Naive thymus-derived CD4-positive, alpha-beta T cell (primary cell): ENCODE measurements at regions of chr11 and their contacts with region 1.

Region 1: GRCh38 chr11:108222686-108223448 is at the start of gene ATM:
- DNase-seq: peak; percentile 94 to 99 (median 98)
- ATAC-seq: peak; percentile 91
- H3K4me3 ChIP-seq: peak within 1 kb of the TSS; percentile 93
- H3K4me3 Mint-ChIP-seq: no peak within 1 kb of the TSS
- H3K27ac ChIP-seq: peak within 1 kb of the TSS; percentile 98
- H3K27ac Mint-ChIP-seq: no peak within 1 kb of the TSS
- H3K4me1 ChIP-seq: peaks cover 26 to 31% of the 10 kb centered on the region in 2 donors
- H3K4me1 Mint-ChIP-seq: peaks cover 32 to 57% (median 37%) of the 10 kb centered on the region in 7 donors
- H3K27me3 ChIP-seq: no peaks in the 10 kb centered on the region
- H3K27me3 Mint-ChIP-seq: no peaks in the 10 kb centered on the region
- total RNA-seq, gene ATM: 183 to 879 (median 440) TPM

Region 2: GRCh38 chr11:107457558-107458271 is 765.2 kb before region 1 on chr11 and contains the start of gene CWF19L2:
- CTCF ChIA-PET with region 1: no interaction called
- POLR2A ChIA-PET with region 1: no interaction called
- intact Hi-C with region 1: loop called in 1 of 2 experiments (anchors 1 kb)
- DNase-seq: peak; percentile 62 to 94 (median 92)
- ATAC-seq: peak; percentile 99
- H3K4me3 ChIP-seq: peak within 1 kb of the TSS; percentile 91
- H3K4me3 Mint-ChIP-seq: peak within 1 kb of the TSS; percentile 84 to 100 (median 93)
- H3K27ac ChIP-seq: peak within 1 kb of the TSS; percentile 82
- H3K27ac Mint-ChIP-seq: peak within 1 kb of the TSS; percentile 87 to 98 (median 96)
- H3K4me1 ChIP-seq: peaks cover 7 to 13% of the 10 kb centered on the region in 2 donors
- H3K4me1 Mint-ChIP-seq: peaks cover 19 to 50% (median 32%) of the 10 kb centered on the region in 7 donors
- H3K27me3 ChIP-seq: no peaks in the 10 kb centered on the region
- H3K27me3 Mint-ChIP-seq: peaks cover 0 to 10% (median 0%) of the 10 kb centered on the region in 5 donors
- total RNA-seq, gene CWF19L2: 17.0 to 38.9 (median 27.2) TPM

Region 3: DNA sequence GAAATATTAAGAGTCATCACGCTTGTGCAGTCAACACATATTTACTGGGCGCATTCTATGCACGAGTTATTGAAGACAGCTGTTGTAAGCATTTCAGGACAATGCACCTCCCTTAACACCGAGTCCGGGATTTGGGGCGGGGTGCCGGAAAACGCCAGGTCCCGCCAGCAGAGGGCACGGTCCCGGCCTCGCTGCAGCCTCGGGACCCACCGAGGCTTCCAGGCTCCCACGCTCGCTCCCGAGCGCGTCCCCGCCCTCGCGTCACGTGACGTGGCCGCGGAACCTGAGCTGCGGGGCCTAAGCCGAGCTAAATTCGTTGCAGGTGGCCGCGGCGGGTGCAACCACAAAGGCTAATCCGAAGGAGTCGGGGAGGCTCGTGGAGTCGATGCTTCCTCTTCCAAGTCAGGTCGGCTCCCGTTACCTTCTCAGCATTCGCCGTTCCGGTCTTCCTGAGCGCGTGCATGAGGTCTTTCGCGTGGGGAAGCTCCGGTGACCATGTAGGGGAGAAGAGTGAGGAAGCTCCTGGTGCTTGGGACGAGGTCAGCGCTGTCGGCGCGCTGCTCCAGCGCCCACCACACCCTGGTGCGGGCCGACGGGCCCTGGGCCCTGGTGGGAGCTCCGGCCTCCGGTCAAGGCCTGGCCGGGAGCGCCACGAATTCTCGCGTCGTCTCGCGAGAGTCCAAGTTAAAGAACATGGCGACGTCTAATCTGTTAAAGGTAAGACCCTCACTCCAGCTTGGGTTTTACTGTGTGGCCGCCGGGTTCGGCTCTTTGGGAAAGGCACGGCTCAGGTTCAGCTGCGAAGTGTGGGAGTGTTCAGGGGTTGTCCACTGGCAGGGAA is 214.0 kb before region 1 on chr11 and contains the start of gene CUL5:
- CTCF ChIA-PET with region 1: no interaction called
- POLR2A ChIA-PET with region 1: no interaction called
- intact Hi-C with region 1: loop called (anchors 2 kb)
- DNase-seq: peak; percentile 84 to 94 (median 90)
- ATAC-seq: peak; percentile 94
- H3K4me3 ChIP-seq: peak within 1 kb of the TSS; percentile 94
- H3K4me3 Mint-ChIP-seq: peak within 1 kb of the TSS in 9 of 10 donors; percentile 89 to 100 (median 99)
- H3K27ac ChIP-seq: peak within 1 kb of the TSS; percentile 94
- H3K27ac Mint-ChIP-seq: peak within 1 kb of the TSS; percentile 94 to 99 (median 96)
- H3K4me1 ChIP-seq: peaks cover 15 to 25% of the 10 kb centered on the region in 2 donors
- H3K4me1 Mint-ChIP-seq: peaks cover 7 to 18% (median 12%) of the 10 kb centered on the region in 7 donors
- H3K27me3 ChIP-seq: no peaks in the 10 kb centered on the region
- H3K27me3 Mint-ChIP-seq: no peaks in the 10 kb centered on the region
- total RNA-seq, gene CUL5: 32.3 to 59.7 (median 39.2) TPM

Region 4: GRCh38 chr11:108199446-108200321 is 23.2 kb before region 1 on chr11:
- CTCF ChIA-PET with region 1: no interaction called
- POLR2A ChIA-PET with region 1: interaction called, 5 read pairs
- intact Hi-C with region 1: loop called (anchors 1 to 2 kb)
- DNase-seq: peak in 3 of 9 donors; percentile 8 to 59 (median 46)
- ATAC-seq: peak; percentile 85
- H3K4me3 ChIP-seq: no peak overlapping the region
- H3K4me3 Mint-ChIP-seq: peak overlapping the region in 6 of 10 donors; percentile 10 to 55 (median 42)
- H3K27ac ChIP-seq: peak overlapping the region; percentile 31
- H3K27ac Mint-ChIP-seq: peak overlapping the region in 8 of 9 donors; percentile 7 to 86 (median 69)
- H3K4me1 ChIP-seq: peaks cover 0 to 40% of the 10 kb centered on the region in 2 donors
- H3K4me1 Mint-ChIP-seq: peaks cover 31 to 89% (median 81%) of the 10 kb centered on the region in 7 donors
- H3K27me3 ChIP-seq: no peaks in the 10 kb centered on the region
- H3K27me3 Mint-ChIP-seq: no peaks in the 10 kb centered on the region

Region 5: GRCh38 chr11:108253176-108253575 is 30.3 kb after region 1 on chr11:
- CTCF ChIA-PET with region 1: interaction called, 5 read pairs
- POLR2A ChIA-PET with region 1: interaction called, 161 read pairs
- intact Hi-C with region 1: loop called (anchors 1 to 5 kb)
- DNase-seq: peak in 2 of 9 donors; percentile 16 to 35
- ATAC-seq: no peak
- H3K4me3 ChIP-seq: no peak overlapping the region
- H3K4me3 Mint-ChIP-seq: peak overlapping the region in 1 of 10 donors; percentile 23
- H3K27ac ChIP-seq: peak overlapping the region; percentile 28
- H3K27ac Mint-ChIP-seq: peak overlapping the region in 6 of 9 donors; percentile 48 to 83 (median 73)
- H3K4me1 ChIP-seq: peaks cover 9 to 13% of the 10 kb centered on the region in 2 donors
- H3K4me1 Mint-ChIP-seq: peaks cover 14 to 91% (median 74%) of the 10 kb centered on the region in 7 donors
- H3K27me3 ChIP-seq: no peaks in the 10 kb centered on the region
- H3K27me3 Mint-ChIP-seq: no peaks in the 10 kb centered on the region

Region 6: GRCh38 chr11:108302121-108302785 is 79.4 kb after region 1 on chr11:
- CTCF ChIA-PET with region 1: interaction called, 3 read pairs
- POLR2A ChIA-PET with region 1: interaction called, 4 read pairs
- intact Hi-C with region 1: loop called in 1 of 2 experiments (anchors 5 kb)
- DNase-seq: no peak
- ATAC-seq: no peak
- H3K4me3 ChIP-seq: no peak overlapping the region
- H3K4me3 Mint-ChIP-seq: no peak overlapping the region
- H3K27ac ChIP-seq: no peak overlapping the region
- H3K27ac Mint-ChIP-seq: peak overlapping the region in 8 of 9 donors; percentile 36 to 82 (median 67)
- H3K4me1 ChIP-seq: no peaks in the 10 kb centered on the region
- H3K4me1 Mint-ChIP-seq: peaks cover 0 to 63% (median 38%) of the 10 kb centered on the region in 7 donors
- H3K27me3 ChIP-seq: no peaks in the 10 kb centered on the region
- H3K27me3 Mint-ChIP-seq: no peaks in the 10 kb centered on the region

Region 7: GRCh38 chr11:108593214-108593922 is 370.5 kb after region 1 on chr11 and contains the start of gene EXPH5:
- CTCF ChIA-PET with region 1: interaction called, 3 read pairs
- POLR2A ChIA-PET with region 1: no interaction called
- intact Hi-C with region 1: loop called (anchors 1 to 2 kb)
- DNase-seq: peak; percentile 62 to 89 (median 87)
- ATAC-seq: peak; percentile 97
- H3K4me3 ChIP-seq: peak within 1 kb of the TSS; percentile 75
- H3K4me3 Mint-ChIP-seq: peak within 1 kb of the TSS; percentile 90 to 100 (median 97)
- H3K27ac ChIP-seq: peak within 1 kb of the TSS; percentile 81
- H3K27ac Mint-ChIP-seq: peak within 1 kb of the TSS; percentile 79 to 98 (median 95)
- H3K4me1 ChIP-seq: peaks cover 0 to 13% of the 10 kb centered on the region in 2 donors
- H3K4me1 Mint-ChIP-seq: peaks cover 12 to 27% (median 22%) of the 10 kb centered on the region in 7 donors
- H3K27me3 ChIP-seq: no peaks in the 10 kb centered on the region
- H3K27me3 Mint-ChIP-seq: peaks cover 0 to 60% (median 0%) of the 10 kb centered on the region in 5 donors
- total RNA-seq, gene EXPH5: 1.9 to 8.3 (median 5.9) TPM